Activated naive CD4-positive, alpha-beta T cell treated with anti-CD3 and anti-CD28 coated beads for 36 hours (primary cell): ENCODE measurements at regions of chr2 and their contacts with region 1.

Region 1: DNA sequence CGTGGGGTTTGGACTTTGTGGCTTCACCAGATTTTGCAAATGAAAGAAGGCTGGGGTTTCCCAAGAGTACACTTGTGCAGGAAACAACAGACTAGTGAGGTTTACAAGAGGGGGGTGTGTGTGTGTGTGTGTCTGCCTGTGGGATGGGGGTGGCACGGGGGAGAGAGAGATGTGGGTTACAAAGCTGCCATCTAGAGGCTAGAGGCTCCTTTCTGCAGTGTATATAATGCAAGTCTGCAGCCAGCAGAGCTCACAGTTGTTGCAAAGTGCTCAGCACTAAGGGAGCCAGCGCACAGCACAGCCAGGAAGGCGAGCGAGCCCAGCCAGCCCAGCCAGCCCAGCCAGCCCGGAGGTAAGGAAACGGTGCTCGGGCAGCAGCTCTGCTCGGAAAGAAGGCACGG is at the start of gene ACKR3:
- DNase-seq: peak; percentile 78
- H3K4me3 Mint-ChIP-seq: peak within 1 kb of the TSS; percentile 63
- H3K27ac Mint-ChIP-seq: no peak within 1 kb of the TSS
- H3K4me1 Mint-ChIP-seq: peaks cover 13% of the 10 kb centered on the region
- H3K27me3 Mint-ChIP-seq: no peaks in the 10 kb centered on the region
- total RNA-seq, gene ACKR3: 0.45 to 0.49 TPM

Region 2: GRCh38 chr2:235766278-235766677 is 803.3 kb before region 1 on chr2:
- CTCF ChIA-PET with region 1: no interaction called
- intact Hi-C with region 1: loop called (anchors 5 kb)
- DNase-seq: peak; percentile 65
- H3K4me3 Mint-ChIP-seq: no peak overlapping the region
- H3K27ac Mint-ChIP-seq: no peak overlapping the region
- H3K4me1 Mint-ChIP-seq: peaks cover 2% of the 10 kb centered on the region
- H3K27me3 Mint-ChIP-seq: peaks cover 7% of the 10 kb centered on the region

Region 3: GRCh38 chr2:236352761-236353593 is 216.6 kb before region 1 on chr2:
- CTCF ChIA-PET with region 1: interaction called, 15 read pairs
- intact Hi-C with region 1: loop called (anchors 1 kb)
- DNase-seq: peak; percentile 45
- H3K4me3 Mint-ChIP-seq: no peak overlapping the region
- H3K27ac Mint-ChIP-seq: no peak overlapping the region
- H3K4me1 Mint-ChIP-seq: no peaks in the 10 kb centered on the region
- H3K27me3 Mint-ChIP-seq: no peaks in the 10 kb centered on the region

Region 4: DNA sequence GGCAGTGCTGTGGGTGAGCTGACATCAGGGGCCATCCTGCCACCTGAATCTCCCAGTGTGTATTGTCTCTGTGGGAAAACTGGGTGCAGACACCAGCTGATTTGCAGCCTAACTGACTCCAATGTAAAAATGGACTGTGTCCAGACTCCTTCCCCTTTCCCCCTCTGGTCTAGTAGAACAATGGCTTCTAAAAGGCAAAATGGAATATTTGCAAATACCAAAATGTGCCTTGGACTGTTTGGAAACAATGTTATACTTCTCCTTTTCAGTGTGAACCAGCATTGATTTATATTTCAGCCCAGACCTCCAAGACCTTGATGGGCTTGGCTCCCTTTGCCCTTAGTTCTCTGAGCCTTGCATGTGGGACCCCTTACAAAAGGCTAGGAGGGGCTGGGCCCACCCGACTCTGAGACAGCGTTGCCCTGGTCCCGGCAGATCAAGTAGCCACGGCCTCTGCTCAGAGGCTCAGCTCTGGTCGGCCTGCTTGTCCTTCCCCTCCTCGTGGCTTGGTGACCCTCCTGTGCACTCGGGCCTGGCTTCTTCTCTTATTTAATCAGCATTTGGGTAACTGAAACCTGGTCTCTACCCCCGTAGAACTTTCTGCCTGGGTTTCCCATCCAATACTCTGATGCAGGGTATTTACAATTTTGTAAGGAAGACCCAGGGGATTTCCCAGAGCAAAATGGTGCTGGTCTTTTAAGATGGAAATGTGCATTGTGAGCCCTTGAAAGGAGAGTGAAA is 17.9 kb before region 1 on chr2:
- CTCF ChIA-PET with region 1: interaction called, 20 read pairs
- intact Hi-C with region 1: no loop called
- DNase-seq: no peak
- H3K4me3 Mint-ChIP-seq: no peak overlapping the region
- H3K27ac Mint-ChIP-seq: peak overlapping the region; percentile 64
- H3K4me1 Mint-ChIP-seq: peaks cover 93% of the 10 kb centered on the region
- H3K27me3 Mint-ChIP-seq: no peaks in the 10 kb centered on the region

Region 5: GRCh38 chr2:237072067-237072931 is 502.7 kb after region 1 on chr2:
- CTCF ChIA-PET with region 1: interaction called, 3 read pairs
- intact Hi-C with region 1: loop called (anchors 5 kb)
- DNase-seq: peak; percentile 82
- H3K4me3 Mint-ChIP-seq: no peak overlapping the region
- H3K27ac Mint-ChIP-seq: no peak overlapping the region
- H3K4me1 Mint-ChIP-seq: no peaks in the 10 kb centered on the region
- H3K27me3 Mint-ChIP-seq: no peaks in the 10 kb centered on the region